ENCODE measurements at regions of chr17 and their contacts with region 1.

Region 1: DNA sequence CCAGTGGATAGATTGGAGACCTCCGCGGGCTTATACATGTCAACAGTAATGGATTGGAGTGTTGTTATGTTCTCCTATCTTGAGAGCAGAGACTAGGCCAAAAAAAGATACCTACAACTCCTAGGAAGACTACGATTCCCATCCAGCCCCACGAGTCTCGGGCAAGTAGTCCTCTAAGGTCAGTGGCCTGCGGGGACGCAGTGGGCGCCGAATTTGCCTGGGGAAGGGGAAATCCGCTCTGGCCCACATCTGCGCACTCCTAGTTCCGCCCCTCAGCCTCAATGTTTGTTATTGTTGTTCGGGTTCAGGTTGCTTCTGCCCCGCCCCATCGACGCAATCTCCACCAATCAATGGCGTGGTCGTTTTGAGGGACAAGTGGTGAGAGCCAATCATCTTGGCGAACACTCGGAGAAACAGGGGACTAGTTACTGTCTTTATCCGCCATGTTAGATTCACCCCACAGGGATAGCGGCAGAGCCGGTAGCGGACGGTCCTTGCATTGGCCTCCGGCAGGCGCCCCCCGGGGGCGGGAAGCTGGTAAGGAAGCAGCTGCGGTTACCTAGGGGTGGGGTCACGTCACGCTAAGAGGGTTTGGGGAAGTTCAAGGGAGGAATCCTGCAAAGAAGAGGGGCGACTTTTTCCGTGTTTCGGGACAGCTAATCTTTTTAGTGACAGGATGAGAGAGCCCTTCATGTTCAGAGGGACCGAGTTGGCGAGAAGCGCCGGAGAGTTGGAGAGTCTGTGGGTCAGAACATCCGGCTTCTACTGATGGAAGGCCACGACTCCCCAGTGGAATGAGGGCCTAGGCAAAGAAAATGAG is at the start of gene NBR1:
- DNase-seq: peak; percentile 97 to 99 (median 97)
- H3K4me3 ChIP-seq: peak within 1 kb of the TSS; percentile 80 to 85
- H3K4me3 Mint-ChIP-seq: no peak within 1 kb of the TSS
- H3K27ac ChIP-seq: peak within 1 kb of the TSS; percentile 99
- H3K27ac Mint-ChIP-seq: no peak within 1 kb of the TSS
- H3K4me1 ChIP-seq: peaks cover 40% of the 10 kb centered on the region
- H3K4me1 Mint-ChIP-seq: peaks cover 16 to 36% (median 23%) of the 10 kb centered on the region in 4 donors
- H3K27me3 ChIP-seq: no peaks in the 10 kb centered on the region
- H3K27me3 Mint-ChIP-seq: no peaks in the 10 kb centered on the region
- total RNA-seq, gene NBR1: 90.3 to 93.2 TPM

Region 2: DNA sequence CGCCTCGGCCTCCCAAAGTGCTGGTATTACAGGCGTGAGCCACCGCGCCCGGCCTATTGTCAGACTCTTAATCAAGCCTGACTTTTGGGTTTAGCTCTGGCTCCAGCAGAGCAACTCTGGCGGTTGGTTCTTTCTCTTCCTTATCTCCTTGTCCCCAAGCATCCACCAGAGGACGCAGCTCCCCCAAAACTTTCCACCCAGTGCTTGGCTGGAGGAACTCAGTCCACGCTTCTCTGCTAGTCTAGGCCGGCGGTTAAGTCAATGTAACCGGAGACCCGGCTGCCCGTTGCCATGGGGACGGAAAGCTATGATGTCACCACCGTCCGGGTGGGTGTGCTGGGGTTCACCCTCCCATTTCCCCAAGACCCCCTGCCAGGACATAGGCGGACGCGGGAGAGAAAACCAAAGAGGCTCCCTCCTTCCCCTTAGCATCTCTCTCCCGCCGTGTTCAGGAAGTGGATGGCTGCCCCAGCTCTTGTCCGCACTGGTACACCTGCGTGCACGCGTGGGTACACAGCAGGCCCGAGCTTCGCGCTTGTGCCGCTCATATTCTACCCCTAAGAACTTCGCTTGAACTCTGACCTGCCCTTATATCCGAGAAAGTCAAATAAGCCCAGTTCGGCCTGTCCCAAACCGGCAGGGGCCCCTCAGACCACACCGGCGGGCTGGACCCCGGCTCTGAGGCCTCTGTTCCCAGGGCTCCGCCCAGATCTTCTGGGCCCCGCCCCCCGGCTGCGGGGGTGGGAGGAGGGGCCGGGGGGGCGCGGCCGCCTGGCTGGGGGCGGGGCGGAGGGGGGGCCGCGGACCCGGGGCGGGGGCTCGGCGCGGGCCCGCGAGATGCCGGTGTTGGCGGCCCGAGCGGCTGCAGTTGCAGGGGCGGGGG is 146.3 kb before region 1 on chr17 and contains the start of gene RND2:
- CTCF ChIA-PET with region 1: interaction called, 3 read pairs
- POLR2A ChIA-PET with region 1: interaction called, 12 read pairs
- intact Hi-C with region 1: loop called (anchors 1 kb)
- DNase-seq: peak; percentile 79 to 90 (median 81)
- H3K4me3 ChIP-seq: peak within 1 kb of the TSS; percentile 65 to 81
- H3K4me3 Mint-ChIP-seq: peak within 1 kb of the TSS; percentile 87 to 95 (median 91)
- H3K27ac ChIP-seq: peak within 1 kb of the TSS; percentile 69
- H3K27ac Mint-ChIP-seq: peak within 1 kb of the TSS; percentile 86 to 98 (median 96)
- H3K4me1 ChIP-seq: peaks cover 32% of the 10 kb centered on the region
- H3K4me1 Mint-ChIP-seq: peaks cover 9 to 35% (median 27%) of the 10 kb centered on the region in 4 donors
- H3K27me3 ChIP-seq: no peaks in the 10 kb centered on the region
- H3K27me3 Mint-ChIP-seq: no peaks in the 10 kb centered on the region
- total RNA-seq, gene RND2: 0.28 to 0.29 TPM

Region 3: DNA sequence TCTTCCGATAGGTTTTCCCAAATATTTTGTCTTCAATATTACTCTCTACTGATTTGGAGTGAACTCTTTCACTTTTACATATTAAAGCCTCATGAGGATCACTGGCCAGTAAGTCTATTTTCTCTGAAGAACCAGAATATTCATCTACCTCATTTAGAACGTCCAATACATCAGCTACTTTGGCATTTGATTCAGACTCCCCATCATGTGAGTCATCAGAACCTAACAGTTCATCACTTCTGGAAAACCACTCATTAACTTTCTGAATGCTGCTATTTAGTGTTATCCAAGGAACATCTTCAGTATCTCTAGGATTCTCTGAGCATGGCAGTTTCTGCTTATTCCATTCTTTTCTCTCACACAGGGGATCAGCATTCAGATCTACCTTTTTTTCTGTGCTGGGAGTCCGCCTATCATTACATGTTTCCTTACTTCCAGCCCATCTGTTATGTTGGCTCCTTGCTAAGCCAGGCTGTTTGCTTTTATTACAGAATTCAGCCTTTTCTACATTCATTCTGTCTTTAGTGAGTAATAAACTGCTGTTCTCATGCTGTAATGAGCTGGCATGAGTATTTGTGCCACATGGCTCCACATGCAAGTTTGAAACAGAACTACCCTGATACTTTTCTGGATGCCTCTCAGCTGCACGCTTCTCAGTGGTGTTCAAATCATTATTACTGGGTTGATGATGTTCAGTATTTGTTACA is 76.7 kb before region 1 on chr17:
- CTCF ChIA-PET with region 1: no interaction called
- POLR2A ChIA-PET with region 1: no interaction called
- intact Hi-C with region 1: no loop called
- DNase-seq: no peak
- H3K4me3 ChIP-seq: no peak overlapping the region
- H3K4me3 Mint-ChIP-seq: no peak overlapping the region
- H3K27ac ChIP-seq: no peak overlapping the region
- H3K27ac Mint-ChIP-seq: peak overlapping the region in 1 of 7 donors; percentile 53
- H3K4me1 ChIP-seq: no peaks in the 10 kb centered on the region
- H3K4me1 Mint-ChIP-seq: no peaks in the 10 kb centered on the region
- H3K27me3 ChIP-seq: no peaks in the 10 kb centered on the region
- H3K27me3 Mint-ChIP-seq: no peaks in the 10 kb centered on the region

Region 4: GRCh38 chr17:43211480-43212402 is 40.8 kb after region 1 on chr17 and contains the start of gene TMEM106A:
- CTCF ChIA-PET with region 1: no interaction called
- POLR2A ChIA-PET with region 1: interaction called, 53 read pairs
- intact Hi-C with region 1: loop called (anchors 1 kb)
- DNase-seq: peak; percentile 72 to 76 (median 74)
- H3K4me3 ChIP-seq: peak within 1 kb of the TSS; percentile 82 to 86
- H3K4me3 Mint-ChIP-seq: peak within 1 kb of the TSS; percentile 92 to 100 (median 99)
- H3K27ac ChIP-seq: peak within 1 kb of the TSS; percentile 87
- H3K27ac Mint-ChIP-seq: peak within 1 kb of the TSS; percentile 84 to 99 (median 98)
- H3K4me1 ChIP-seq: peaks cover 22% of the 10 kb centered on the region
- H3K4me1 Mint-ChIP-seq: peaks cover 17 to 43% (median 28%) of the 10 kb centered on the region in 4 donors
- H3K27me3 ChIP-seq: no peaks in the 10 kb centered on the region
- H3K27me3 Mint-ChIP-seq: no peaks in the 10 kb centered on the region
- total RNA-seq, gene TMEM106A: 12.5 to 12.8 TPM

Region 5: GRCh38 chr17:43367737-43368242 is 196.8 kb after region 1 on chr17:
- CTCF ChIA-PET with region 1: no interaction called
- POLR2A ChIA-PET with region 1: interaction called, 27 read pairs
- intact Hi-C with region 1: loop called (anchors 2 kb)
- DNase-seq: peak in 2 of 5 donors; percentile 60 to 87
- H3K4me3 ChIP-seq: peak overlapping the region; percentile 1 to 76
- H3K4me3 Mint-ChIP-seq: peak overlapping the region; percentile 91 to 98 (median 95)
- H3K27ac ChIP-seq: peak overlapping the region; percentile 91
- H3K27ac Mint-ChIP-seq: peak overlapping the region; percentile 99 to 100 (median 100)
- H3K4me1 ChIP-seq: peaks cover 22% of the 10 kb centered on the region
- H3K4me1 Mint-ChIP-seq: peaks cover 13 to 50% (median 35%) of the 10 kb centered on the region in 4 donors
- H3K27me3 ChIP-seq: no peaks in the 10 kb centered on the region
- H3K27me3 Mint-ChIP-seq: no peaks in the 10 kb centered on the region

Measured in CD4-positive, alpha-beta memory T cell (primary cell).